Activated T-helper 1 cell treated with anti-CD3 and anti-CD28 coated beads, Interleukin-12 subunit alpha, Interleukin-12 subunit beta, Interleukin-2, Interleukin-4 antibody, amounts not matched to agents 30 ng/mL and 10 ng/mL and 1 ng/mL, durations not matched to agents 14 hours and 24 hours and 36 hours (primary cell): ENCODE measurements at regions of chr14 and their contacts with region 1.

Region 1: GRCh38 chr14:64294672-64295413 is 672 bp upstream of the ESR2 start:
- DNase-seq: peak; percentile 73
- H3K4me3 Mint-ChIP-seq: peak overlapping the region; percentile 73
- H3K27ac Mint-ChIP-seq: no peak overlapping the region
- H3K4me1 Mint-ChIP-seq: peaks cover 35% of the 10 kb centered on the region
- H3K27me3 Mint-ChIP-seq: peaks cover 26% of the 10 kb centered on the region

Region 2: GRCh38 chr14:63800651-63801375 is 494.0 kb before region 1 on chr14:
- intact Hi-C with region 1: loop called (anchors 1 kb)
- DNase-seq: no peak
- H3K4me3 Mint-ChIP-seq: no peak overlapping the region
- H3K27ac Mint-ChIP-seq: no peak overlapping the region
- H3K4me1 Mint-ChIP-seq: peaks cover 5% of the 10 kb centered on the region
- H3K27me3 Mint-ChIP-seq: peaks cover 18% of the 10 kb centered on the region

Region 3: DNA sequence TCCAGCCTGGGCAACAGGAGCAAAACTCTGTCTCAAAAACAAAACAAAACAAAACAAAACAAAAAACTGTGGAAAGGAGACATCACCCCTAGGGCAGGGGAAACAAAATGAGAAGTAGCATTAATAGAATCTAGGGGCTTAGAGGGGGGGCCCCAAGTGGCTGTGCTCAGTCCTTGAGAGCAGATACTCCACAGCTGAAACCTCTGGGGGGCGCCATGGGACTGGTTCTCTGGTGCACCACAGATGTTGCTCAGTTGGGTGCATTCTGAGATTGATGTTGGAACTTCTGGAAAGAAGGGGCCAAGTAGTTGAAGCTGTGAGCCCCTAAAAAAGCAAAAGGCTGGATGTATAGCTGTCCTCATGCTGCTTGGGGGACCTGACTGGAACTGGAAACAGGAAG is 453.9 kb before region 1 on chr14:
- intact Hi-C with region 1: loop called (anchors 1 kb)
- DNase-seq: peak; percentile 18
- H3K4me3 Mint-ChIP-seq: no peak overlapping the region
- H3K27ac Mint-ChIP-seq: no peak overlapping the region
- H3K4me1 Mint-ChIP-seq: peaks cover 7% of the 10 kb centered on the region
- H3K27me3 Mint-ChIP-seq: peaks cover 11% of the 10 kb centered on the region

Region 4: GRCh38 chr14:64098120-64098519 is 196.7 kb before region 1 on chr14:
- intact Hi-C with region 1: no loop called
- DNase-seq: no peak
- H3K4me3 Mint-ChIP-seq: no peak overlapping the region
- H3K27ac Mint-ChIP-seq: no peak overlapping the region
- H3K4me1 Mint-ChIP-seq: no peaks in the 10 kb centered on the region
- H3K27me3 Mint-ChIP-seq: no peaks in the 10 kb centered on the region

Region 5: GRCh38 chr14:64137657-64138290 is 157.1 kb before region 1 on chr14:
- intact Hi-C with region 1: loop called (anchors 2 kb)
- DNase-seq: no peak
- H3K4me3 Mint-ChIP-seq: no peak overlapping the region
- H3K27ac Mint-ChIP-seq: no peak overlapping the region
- H3K4me1 Mint-ChIP-seq: no peaks in the 10 kb centered on the region
- H3K27me3 Mint-ChIP-seq: no peaks in the 10 kb centered on the region

Region 6: DNA sequence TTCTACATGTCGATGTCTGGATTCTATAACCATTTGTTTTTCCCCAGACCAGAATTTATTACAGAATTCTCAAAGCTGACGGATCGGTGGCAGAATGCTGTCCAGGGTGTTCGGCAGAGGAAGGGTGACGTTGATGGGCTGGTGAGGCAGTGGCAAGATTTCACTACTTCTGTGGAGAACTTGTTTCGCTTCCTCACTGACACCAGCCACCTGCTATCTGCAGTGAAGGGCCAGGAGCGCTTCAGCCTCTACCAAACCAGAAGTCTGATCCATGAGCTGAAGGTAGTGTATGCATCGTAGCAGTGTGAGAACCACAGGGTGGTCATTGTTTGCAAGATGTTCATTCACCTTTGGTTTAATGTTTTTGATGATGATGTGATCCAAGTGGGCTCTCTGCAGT is 124.7 kb before region 1 on chr14:
- intact Hi-C with region 1: loop called (anchors 2 kb)
- DNase-seq: no peak
- H3K4me3 Mint-ChIP-seq: no peak overlapping the region
- H3K27ac Mint-ChIP-seq: no peak overlapping the region
- H3K4me1 Mint-ChIP-seq: peaks cover 4% of the 10 kb centered on the region
- H3K27me3 Mint-ChIP-seq: no peaks in the 10 kb centered on the region

Region 7: DNA sequence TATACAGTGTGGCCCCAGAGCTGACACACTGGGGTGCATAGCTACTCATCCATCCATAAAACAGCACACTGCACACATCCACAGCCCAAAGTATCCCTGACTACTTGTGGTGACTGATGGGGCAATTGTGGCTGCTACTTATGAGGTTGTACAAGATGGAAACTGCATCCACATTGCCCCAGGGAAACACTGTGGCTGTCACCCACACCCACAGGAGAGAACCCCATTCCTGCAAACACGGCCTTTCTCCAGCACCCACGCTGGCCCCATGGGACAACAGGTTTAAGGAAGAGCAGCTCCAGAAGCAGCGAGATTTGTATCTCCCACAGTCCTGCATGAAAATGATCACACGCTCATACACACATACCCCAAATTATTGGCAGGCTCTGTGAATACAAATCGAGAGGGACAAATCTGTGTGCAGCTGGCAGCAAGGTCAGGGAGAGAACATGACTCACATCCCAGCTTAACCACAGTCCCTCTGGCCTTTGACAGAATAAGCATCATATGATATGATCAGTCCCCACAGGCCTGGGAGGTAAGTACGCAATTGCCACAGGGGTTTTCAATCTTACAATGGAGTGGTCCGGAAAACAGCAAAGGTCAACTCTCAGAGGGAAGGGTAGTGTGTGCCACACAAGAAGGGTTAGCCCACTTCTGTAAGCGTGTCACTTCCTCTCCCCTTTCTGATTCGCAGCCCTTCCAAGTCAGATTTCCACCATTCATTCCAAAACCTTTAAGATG is 62.6 kb before region 1 on chr14:
- intact Hi-C with region 1: loop called (anchors 1 kb)
- DNase-seq: no peak
- H3K4me3 Mint-ChIP-seq: no peak overlapping the region
- H3K27ac Mint-ChIP-seq: peak overlapping the region; percentile 67
- H3K4me1 Mint-ChIP-seq: peaks cover 12% of the 10 kb centered on the region
- H3K27me3 Mint-ChIP-seq: peaks cover 2% of the 10 kb centered on the region

Region 8: GRCh38 chr14:64338616-64339316 is 43.9 kb after region 1 on chr14:
- intact Hi-C with region 1: no loop called
- DNase-seq: peak; percentile 85
- H3K4me3 Mint-ChIP-seq: peak overlapping the region; percentile 81
- H3K27ac Mint-ChIP-seq: peak overlapping the region; percentile 84
- H3K4me1 Mint-ChIP-seq: peaks cover 29% of the 10 kb centered on the region
- H3K27me3 Mint-ChIP-seq: no peaks in the 10 kb centered on the region